Heart left ventricle (tissue), 16 donors: ENCODE measurements at regions of chr12 and their contacts with region 1.

Region 1: DNA sequence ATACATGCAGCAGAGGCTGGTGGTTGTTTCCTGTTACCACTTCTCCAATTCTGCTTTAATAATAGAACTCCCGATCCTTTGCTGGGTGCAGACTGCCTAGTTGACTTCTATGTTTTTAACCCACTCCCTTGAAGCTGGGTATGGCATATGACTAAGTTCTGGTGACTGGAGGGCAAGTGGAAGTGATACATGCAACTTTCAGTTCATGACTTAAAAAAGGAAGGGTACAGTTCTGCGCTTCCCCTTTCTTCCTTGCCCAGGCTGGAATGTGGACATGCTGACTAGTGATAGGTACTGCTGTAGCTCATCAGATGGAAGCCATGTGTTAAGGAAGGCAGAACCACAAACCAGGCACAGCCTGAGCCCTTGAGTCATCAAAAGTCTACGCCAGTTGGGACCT is 2.4 kb upstream of the A2M start:
- DNase-seq: no peak
- ATAC-seq: peak; percentile 13 to 70 (median 40)
- H3K4me3 ChIP-seq: no peak overlapping the region
- H3K27ac ChIP-seq: peak overlapping the region; percentile 73 to 90 (median 83)
- H3K4me1 ChIP-seq: peaks cover 3 to 70% (median 39%) of the 10 kb centered on the region in 12 donors
- H3K27me3 ChIP-seq: no peaks in the 10 kb centered on the region
- CTCF ChIP-seq: no peak
- POLR2A ChIP-seq: no peak

Region 2: DNA sequence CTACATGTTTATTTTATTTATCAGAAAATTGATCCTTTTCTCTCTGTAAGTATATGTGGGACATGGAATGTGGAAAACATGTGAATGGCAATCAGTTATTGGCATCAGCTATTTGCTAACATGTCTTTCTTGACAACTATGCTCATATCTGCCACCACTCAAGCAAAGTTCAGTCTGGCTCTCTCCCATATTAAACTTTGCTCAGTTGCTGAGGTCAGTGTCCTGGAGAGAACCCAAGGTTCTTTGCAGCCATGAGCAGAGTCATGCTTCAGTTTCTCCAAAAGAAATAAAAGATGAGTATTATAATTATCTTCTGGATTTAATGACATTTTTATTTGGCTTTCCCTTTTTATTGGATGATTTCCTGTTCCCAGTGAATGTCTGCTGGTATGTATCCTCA is 45.1 kb before region 1 on chr12:
- intact Hi-C with region 1: loop called in 2 of 10 experiments (anchors 5 kb)
- DNase-seq: no peak
- ATAC-seq: peak in 3 of 4 donors; percentile 73 to 78 (median 74)
- H3K4me3 ChIP-seq: no peak overlapping the region
- H3K27ac ChIP-seq: peak overlapping the region in 3 of 12 donors; percentile 2 to 18 (median 12)
- H3K4me1 ChIP-seq: peaks cover 0 to 11% (median 0%) of the 10 kb centered on the region in 12 donors
- H3K27me3 ChIP-seq: no peaks in the 10 kb centered on the region
- CTCF ChIP-seq: no peak
- POLR2A ChIP-seq: no peak

Region 3: DNA sequence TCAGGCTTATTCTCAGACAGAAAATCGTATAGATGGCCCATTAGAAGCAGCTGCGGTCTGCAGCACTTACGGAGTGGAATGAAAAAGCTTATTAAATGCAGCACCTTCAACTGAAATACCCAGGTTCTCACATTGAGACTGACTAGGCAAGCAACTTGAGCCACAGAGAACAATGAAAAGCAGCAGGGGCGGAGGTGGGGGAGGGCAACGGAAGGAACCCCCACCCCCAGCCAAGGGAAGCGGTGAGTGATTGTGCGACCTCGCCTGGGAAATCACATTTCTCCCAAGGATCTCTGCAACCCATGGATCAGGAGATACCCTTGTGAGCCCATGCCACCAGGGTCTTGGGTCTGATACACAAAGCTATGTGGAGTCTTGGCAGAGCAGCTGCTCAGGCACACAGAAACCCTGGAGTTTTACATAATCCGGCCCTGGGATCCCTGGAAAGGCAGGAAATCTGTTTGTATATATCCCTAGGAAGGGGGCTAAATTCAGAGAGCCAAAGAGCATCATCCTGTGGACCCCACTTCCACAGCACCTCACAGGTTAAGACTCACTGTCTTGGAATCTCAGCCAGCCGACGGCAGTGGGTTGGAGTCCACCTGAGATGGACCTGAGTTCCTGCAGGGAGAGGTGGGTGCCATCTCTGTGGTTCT is 51.9 kb after region 1 on chr12:
- intact Hi-C with region 1: loop called in 3 of 10 experiments (anchors 2 to 5 kb)
- DNase-seq: peak in 4 of 5 donors; percentile 34 to 65 (median 48)
- ATAC-seq: peak; percentile 67 to 94 (median 73)
- H3K4me3 ChIP-seq: peak overlapping the region in 5 of 12 donors; percentile 5 to 28 (median 22)
- H3K27ac ChIP-seq: peak overlapping the region; percentile 27 to 83 (median 60)
- H3K4me1 ChIP-seq: peaks cover 0 to 35% (median 9%) of the 10 kb centered on the region in 12 donors
- H3K27me3 ChIP-seq: no peaks in the 10 kb centered on the region
- CTCF ChIP-seq: no peak
- POLR2A ChIP-seq: peak in 1 of 2 donors; percentile 21

Region 4: GRCh38 chr12:9244894-9245293 is 126.7 kb after region 1 on chr12:
- intact Hi-C with region 1: loop called in 5 of 10 experiments (anchors 2 to 10 kb)
- DNase-seq: no peak
- ATAC-seq: no peak
- H3K4me3 ChIP-seq: no peak overlapping the region
- H3K27ac ChIP-seq: peak overlapping the region in 3 of 12 donors; percentile 10 to 67 (median 29)
- H3K4me1 ChIP-seq: peaks cover 0 to 11% (median 0%) of the 10 kb centered on the region in 12 donors
- H3K27me3 ChIP-seq: no peaks in the 10 kb centered on the region
- CTCF ChIP-seq: no peak
- POLR2A ChIP-seq: no peak